ENCODE measurements at regions of chr3 and their contacts with region 1.

Region 1: DNA sequence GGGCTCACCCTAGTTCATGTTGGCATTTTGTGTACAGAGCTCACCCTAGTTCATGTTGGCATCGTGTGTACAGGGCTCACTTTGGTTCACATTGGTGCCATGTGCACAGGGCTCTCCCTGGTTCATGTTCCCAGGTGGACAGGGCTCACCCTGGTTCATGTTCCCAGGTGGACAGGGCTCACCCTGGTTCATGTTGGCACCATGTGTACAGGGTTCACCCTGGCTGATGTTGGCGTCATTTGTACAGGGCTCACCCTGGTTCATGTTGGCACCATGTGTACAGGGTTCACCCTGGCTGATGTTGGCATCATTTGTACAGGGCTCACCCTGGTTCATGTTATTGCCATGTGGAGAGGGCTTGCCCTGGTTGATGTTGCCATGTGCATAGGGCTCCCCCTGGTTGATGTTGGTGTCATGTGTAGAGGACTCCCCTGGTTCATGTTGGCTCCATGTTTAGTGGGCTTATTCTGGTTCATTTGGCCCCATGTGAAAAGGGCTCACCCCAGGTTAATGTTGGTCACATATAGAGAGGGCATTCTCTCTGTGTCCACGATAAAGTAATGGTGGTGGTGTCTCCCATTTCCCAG is 31.7 kb upstream of the NR2C2 start:
- DNase-seq: peak in 1 of 4 donors; percentile 7
- ATAC-seq: no peak
- H3K4me3 ChIP-seq: no peak overlapping the region
- H3K27ac ChIP-seq: no peak overlapping the region
- H3K4me1 ChIP-seq: peaks cover 0 to under 1% of the 10 kb centered on the region in 2 donors
- H3K27me3 ChIP-seq: no peaks in the 10 kb centered on the region
- CTCF ChIP-seq: no peak

Region 2: DNA sequence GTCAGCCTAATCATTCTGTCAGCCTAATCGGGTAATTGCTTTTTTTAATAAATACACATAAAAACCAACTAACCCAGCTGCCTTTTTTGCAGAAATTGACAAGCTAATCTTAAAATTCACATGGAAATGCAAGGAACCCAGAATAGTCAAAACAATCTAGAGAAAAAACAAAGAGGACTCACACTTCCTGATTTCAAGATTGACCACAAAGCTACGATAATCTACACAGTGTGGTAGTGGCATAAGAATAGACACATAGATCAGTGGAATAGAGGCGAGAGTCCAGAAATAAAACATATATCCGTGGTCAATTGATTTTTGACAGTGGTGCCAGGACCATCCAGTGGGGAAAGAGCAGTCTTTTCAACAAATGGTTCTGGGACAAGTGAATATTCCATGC is 243.1 kb before region 1 on chr3:
- intact Hi-C with region 1: loop called in 1 of 2 experiments (anchors 5 kb)
- DNase-seq: no peak
- ATAC-seq: no peak
- H3K4me3 ChIP-seq: no peak overlapping the region
- H3K27ac ChIP-seq: no peak overlapping the region
- H3K4me1 ChIP-seq: no peaks in the 10 kb centered on the region
- H3K27me3 ChIP-seq: no peaks in the 10 kb centered on the region
- CTCF ChIP-seq: no peak

Region 3: GRCh38 chr3:14774431-14774830 is 141.3 kb before region 1 on chr3:
- intact Hi-C with region 1: no loop called
- DNase-seq: no peak
- ATAC-seq: no peak
- H3K4me3 ChIP-seq: no peak overlapping the region
- H3K27ac ChIP-seq: no peak overlapping the region
- H3K4me1 ChIP-seq: no peaks in the 10 kb centered on the region
- H3K27me3 ChIP-seq: no peaks in the 10 kb centered on the region
- CTCF ChIP-seq: no peak